A673 (cell line): ENCODE measurements at regions of chr10 and their contacts with region 1.

Region 1: DNA sequence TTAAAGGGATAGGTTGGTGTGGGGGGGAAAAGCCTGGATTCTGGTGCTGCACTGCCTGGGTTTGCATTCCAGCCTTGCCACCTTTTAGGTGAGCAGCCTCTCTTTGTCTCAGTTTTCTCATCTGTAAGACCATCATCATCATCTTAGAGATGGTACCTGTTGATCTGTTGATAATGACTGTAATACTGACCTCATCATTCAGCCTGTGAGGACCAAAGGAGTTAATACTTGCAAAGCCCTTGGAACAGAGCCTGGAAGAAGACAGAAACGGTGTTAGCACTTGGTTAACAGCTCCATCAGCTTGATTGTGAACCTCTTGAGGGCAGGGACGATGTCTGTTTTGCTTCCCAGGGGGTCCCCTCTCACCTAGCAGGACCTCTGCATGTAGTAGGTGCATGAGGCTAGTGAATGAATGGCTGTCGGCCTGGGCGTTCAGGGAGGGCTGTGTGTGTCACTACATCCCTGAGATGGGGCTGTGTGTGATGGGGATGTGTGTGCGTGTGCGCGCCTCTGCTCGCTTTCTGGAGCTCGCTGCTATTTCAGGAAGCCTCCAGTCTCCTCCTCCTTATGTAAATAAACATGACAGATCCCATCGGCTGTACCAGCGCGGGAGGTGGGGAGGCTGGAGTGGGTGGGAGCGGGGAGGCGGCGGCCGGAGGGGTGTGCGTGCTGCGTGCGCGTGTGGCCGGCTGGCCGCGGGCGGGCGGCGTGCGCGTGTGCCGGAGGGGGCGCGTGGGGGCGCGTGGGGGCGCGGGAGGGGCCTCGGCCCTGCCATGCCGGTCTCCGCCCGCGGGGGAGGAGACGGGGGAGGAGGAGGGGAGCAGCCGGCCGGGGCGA is 61.2 kb downstream of the NEURL1 start:
- DNase-seq: peak; percentile 75
- H3K4me3 ChIP-seq: peak overlapping the region; percentile 47
- H3K27ac ChIP-seq: no peak overlapping the region
- H3K4me1 ChIP-seq: no peaks in the 10 kb centered on the region
- H3K27me3 ChIP-seq: no peaks in the 10 kb centered on the region
- CTCF ChIP-seq: no peak

Region 2: GRCh38 chr10:103120977-103121735 is 433.6 kb before region 1 on chr10:
- CTCF ChIA-PET with region 1: no interaction called
- POLR2A ChIA-PET with region 1: no interaction called
- intact Hi-C with region 1: no loop called
- DNase-seq: no peak
- H3K4me3 ChIP-seq: no peak overlapping the region
- H3K27ac ChIP-seq: no peak overlapping the region
- H3K4me1 ChIP-seq: peaks cover 4% of the 10 kb centered on the region
- H3K27me3 ChIP-seq: no peaks in the 10 kb centered on the region
- CTCF ChIP-seq: no peak

Region 3: GRCh38 chr10:103576862-103577261 is 22.2 kb after region 1 on chr10:
- CTCF ChIA-PET with region 1: no interaction called
- POLR2A ChIA-PET with region 1: no interaction called
- intact Hi-C with region 1: no loop called
- DNase-seq: no peak
- H3K4me3 ChIP-seq: no peak overlapping the region
- H3K27ac ChIP-seq: no peak overlapping the region
- H3K4me1 ChIP-seq: no peaks in the 10 kb centered on the region
- H3K27me3 ChIP-seq: no peaks in the 10 kb centered on the region
- CTCF ChIP-seq: no peak

Region 4: DNA sequence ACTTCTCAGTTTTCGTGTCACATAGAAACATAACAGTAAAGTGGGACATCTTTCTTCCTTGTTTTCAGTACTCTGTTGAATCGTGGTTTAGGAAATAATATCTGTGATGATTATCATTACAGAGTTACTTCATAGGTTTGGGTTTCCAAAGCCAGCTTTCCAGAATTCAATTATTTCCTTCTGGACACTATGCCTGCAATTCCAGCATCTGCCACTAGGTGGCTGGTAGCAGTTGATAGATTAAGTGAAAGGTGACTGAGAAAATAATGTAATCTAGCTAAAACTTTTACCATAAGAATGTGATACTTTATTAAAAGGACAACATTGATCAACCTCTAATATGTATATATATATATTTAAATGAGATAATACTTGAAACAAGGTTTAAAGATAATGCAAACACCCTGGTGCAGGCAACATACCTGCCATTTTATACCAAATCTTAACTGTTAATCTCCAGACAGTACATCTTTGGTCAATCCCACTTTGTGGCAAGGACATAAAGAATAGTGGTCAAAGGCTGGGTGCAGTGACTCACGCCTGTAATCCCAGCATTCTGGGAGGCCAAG is 198.1 kb after region 1 on chr10:
- CTCF ChIA-PET with region 1: no interaction called
- POLR2A ChIA-PET with region 1: interaction called, 16 read pairs
- intact Hi-C with region 1: no loop called
- DNase-seq: no peak
- H3K4me3 ChIP-seq: no peak overlapping the region
- H3K27ac ChIP-seq: no peak overlapping the region
- H3K4me1 ChIP-seq: no peaks in the 10 kb centered on the region
- H3K27me3 ChIP-seq: no peaks in the 10 kb centered on the region
- CTCF ChIP-seq: peak; percentile 84